Naive thymus-derived CD8-positive, alpha-beta T cell (primary cell): ENCODE measurements at regions of chr19 and their contacts with region 1.

Region 1: GRCh38 chr19:1896508-1896907 is 8.7 kb upstream of the ADAT3 start:
- DNase-seq: no peak
- ATAC-seq: no peak
- H3K4me3 Mint-ChIP-seq: peak overlapping the region; percentile 61 to 93 (median 90)
- H3K27ac Mint-ChIP-seq: peak overlapping the region in 9 of 10 donors; percentile 53 to 98 (median 96)
- H3K4me1 Mint-ChIP-seq: peaks cover 8 to 53% (median 35%) of the 10 kb centered on the region in 4 donors
- H3K27me3 Mint-ChIP-seq: no peaks in the 10 kb centered on the region

Region 2: GRCh38 chr19:1833540-1833939 is 63.0 kb before region 1 on chr19:
- POLR2A ChIA-PET with region 1: no interaction called
- DNase-seq: no peak
- ATAC-seq: no peak
- H3K4me3 Mint-ChIP-seq: no peak overlapping the region
- H3K27ac Mint-ChIP-seq: peak overlapping the region in 1 of 10 donors; percentile 43
- H3K4me1 Mint-ChIP-seq: peaks cover 10 to 43% (median 13%) of the 10 kb centered on the region in 4 donors
- H3K27me3 Mint-ChIP-seq: no peaks in the 10 kb centered on the region

Region 3: DNA sequence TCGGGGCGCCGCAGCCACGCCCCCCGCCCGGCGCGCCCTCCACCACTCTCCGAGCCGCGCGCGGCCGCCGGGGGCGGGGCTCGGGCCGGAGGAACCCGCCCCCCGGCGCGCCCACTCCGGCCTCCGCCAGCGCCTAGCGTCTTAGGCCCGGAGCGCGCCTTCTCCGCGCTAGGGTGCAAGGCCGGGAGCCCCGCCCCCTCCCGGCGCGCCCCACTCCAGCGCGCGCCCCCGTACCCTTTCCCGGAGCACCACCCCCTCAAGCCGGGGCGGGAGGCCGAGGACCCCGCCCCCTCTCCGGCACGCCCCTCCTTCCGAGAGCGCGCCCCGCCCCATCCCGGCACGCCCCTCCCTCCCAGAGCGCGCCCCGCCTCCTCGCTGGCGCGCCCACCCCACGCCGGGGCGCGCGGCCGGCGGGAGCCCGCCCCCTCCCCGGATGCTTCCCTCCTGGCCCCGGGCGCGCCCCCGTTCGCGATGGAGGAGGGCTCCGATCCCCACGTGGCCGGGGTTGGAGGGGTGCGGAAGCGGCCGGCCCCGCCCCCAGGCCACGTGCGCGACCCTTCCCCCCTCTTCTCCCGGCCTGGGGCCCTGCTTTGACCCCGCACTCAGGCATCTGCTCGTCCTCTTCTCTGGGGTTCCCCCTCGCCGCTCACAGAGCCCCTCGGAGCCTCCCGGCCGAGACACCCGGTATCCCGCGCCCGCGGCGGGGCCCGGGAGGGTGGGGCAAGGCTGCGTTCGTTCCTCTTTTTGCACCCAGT is 32.6 kb before region 1 on chr19:
- POLR2A ChIA-PET with region 1: interaction called, 16 read pairs
- DNase-seq: peak; percentile 88 to 98 (median 94)
- ATAC-seq: peak; percentile 59 to 71
- H3K4me3 Mint-ChIP-seq: peak overlapping the region; percentile 75 to 88 (median 78)
- H3K27ac Mint-ChIP-seq: peak overlapping the region; percentile 16 to 92 (median 85)
- H3K4me1 Mint-ChIP-seq: peaks cover 20 to 45% (median 44%) of the 10 kb centered on the region in 4 donors
- H3K27me3 Mint-ChIP-seq: no peaks in the 10 kb centered on the region

Region 4: DNA sequence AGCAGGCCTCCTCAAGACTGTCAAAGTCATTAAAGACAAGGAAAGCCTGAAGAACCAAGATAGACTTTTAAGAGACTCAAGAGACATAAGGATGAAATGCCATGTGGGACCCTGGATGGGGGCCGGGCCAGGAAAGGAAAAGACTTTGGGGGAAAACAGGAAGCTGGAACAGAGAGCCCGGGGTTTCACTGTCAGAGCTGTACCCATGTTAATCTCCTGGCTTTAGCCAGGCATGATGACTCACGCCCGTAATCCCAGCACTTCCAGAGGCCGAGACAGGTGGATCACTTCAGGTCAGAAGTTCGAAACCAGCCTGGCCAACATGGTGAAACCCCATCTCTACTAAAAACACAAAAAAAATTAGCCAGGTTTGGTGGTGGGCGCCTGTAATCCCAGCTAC is 27.5 kb before region 1 on chr19:
- POLR2A ChIA-PET with region 1: interaction called, 16 read pairs
- DNase-seq: no peak
- ATAC-seq: no peak
- H3K4me3 Mint-ChIP-seq: no peak overlapping the region
- H3K27ac Mint-ChIP-seq: peak overlapping the region in 5 of 10 donors; percentile 11 to 69 (median 15)
- H3K4me1 Mint-ChIP-seq: peaks cover 7 to 50% (median 36%) of the 10 kb centered on the region in 4 donors
- H3K27me3 Mint-ChIP-seq: no peaks in the 10 kb centered on the region

Region 5: DNA sequence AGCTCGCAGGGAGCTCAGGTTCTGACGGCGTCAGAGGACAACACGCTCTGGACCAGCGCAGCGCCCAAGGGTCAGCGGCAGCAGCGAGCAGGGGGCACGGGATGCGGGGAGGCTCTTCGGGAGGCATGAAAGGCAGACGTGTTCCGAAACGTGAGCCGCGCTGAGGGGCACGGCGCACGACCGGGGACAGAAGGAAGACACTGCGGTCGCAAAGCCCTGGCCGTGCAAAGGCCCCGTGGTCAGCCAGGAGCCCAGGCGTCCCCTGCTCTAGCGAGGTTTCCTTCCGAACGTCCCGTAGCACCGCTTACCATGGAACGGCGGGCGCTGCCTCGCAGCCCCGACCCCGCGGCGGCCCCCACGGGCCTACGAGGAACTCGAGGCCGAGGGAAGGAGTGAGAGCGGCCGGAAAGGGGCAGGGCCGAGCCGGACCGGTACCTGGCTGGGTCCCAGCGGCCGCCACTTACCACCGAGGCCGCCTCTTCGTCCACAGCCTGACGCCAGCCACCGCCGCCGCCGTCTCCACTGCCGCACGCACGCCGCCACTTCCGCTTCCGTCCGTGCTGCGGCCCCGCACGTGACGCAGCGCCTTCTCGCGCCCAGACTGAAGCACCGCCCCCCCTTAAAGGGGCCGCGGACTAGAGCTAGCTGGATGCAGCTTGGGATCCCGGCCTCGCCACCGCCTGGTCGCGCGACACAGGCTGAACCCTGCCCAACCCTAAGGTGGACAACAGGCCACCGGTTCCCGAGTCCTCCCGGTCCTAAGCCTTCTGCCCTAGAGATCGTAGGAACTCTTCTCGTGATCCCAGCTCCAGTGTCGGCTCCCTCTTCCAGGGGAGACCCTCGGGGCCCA is 20.6 kb before region 1 on chr19:
- POLR2A ChIA-PET with region 1: interaction called, 113 read pairs
- DNase-seq: peak; percentile 74 to 89 (median 84)
- ATAC-seq: peak; percentile 85 to 89
- H3K4me3 Mint-ChIP-seq: peak overlapping the region; percentile 92 to 99 (median 98)
- H3K27ac Mint-ChIP-seq: peak overlapping the region; percentile 88 to 99 (median 97)
- H3K4me1 Mint-ChIP-seq: peaks cover 13 to 39% (median 34%) of the 10 kb centered on the region in 4 donors
- H3K27me3 Mint-ChIP-seq: no peaks in the 10 kb centered on the region

Region 6: GRCh38 chr19:1884719-1885334 is 11.7 kb before region 1 on chr19:
- POLR2A ChIA-PET with region 1: interaction called, 113 read pairs
- DNase-seq: peak in 1 of 10 donors; percentile 37
- ATAC-seq: peak in 1 of 2 donors; percentile 3
- H3K4me3 Mint-ChIP-seq: peak overlapping the region; percentile 93 to 100 (median 99)
- H3K27ac Mint-ChIP-seq: peak overlapping the region; percentile 96 to 100 (median 100)
- H3K4me1 Mint-ChIP-seq: peaks cover 22 to 41% (median 35%) of the 10 kb centered on the region in 4 donors
- H3K27me3 Mint-ChIP-seq: no peaks in the 10 kb centered on the region

Region 7: DNA sequence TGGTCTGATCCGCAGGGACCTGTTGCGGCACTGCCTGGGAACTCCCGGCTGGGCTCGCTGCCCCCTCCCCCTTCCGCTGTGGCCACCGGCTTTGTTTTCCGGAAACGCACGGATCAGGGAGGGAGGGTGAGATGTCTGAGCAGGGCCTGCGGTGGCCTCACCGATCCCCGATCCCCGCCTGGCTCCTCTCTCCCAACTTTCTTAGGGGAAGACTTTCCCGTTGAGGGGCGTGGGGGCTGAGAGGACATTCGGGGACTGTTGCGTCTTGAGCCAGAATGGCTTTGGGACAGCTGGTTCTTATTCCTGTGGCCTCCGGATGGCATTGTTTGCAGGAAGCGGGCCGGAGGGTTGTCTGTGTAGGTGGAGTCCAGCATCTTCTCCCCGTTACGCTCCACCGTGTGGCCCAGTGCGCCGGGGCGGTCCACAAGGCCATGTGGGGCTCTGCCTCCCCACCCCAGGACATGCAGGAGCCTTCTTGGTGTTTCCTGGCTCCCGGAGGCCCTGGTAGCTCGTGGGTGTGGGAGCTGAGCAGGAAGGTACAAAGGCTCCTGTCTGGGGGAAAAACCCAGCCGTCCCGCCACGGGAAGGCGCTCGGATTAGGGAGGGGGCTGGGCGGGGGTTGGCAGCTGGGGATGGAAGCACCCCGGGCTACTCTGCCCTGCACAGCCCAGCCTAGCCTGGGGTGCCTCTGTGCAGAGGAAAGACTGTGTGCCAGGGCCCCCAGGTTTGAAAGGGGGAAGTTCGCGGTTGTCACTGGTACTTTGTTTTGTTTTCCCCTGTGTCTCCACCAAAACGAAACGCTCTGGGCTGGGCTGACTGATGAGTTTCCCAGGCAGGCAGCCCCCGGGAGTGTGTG is 45.8 kb after region 1 on chr19:
- POLR2A ChIA-PET with region 1: interaction called, 10 read pairs
- DNase-seq: peak; percentile 65 to 89 (median 84)
- ATAC-seq: peak; percentile 64 to 70
- H3K4me3 Mint-ChIP-seq: peak overlapping the region; percentile 93 to 98 (median 97)
- H3K27ac Mint-ChIP-seq: peak overlapping the region; percentile 94 to 100 (median 98)
- H3K4me1 Mint-ChIP-seq: peaks cover 16 to 52% (median 34%) of the 10 kb centered on the region in 4 donors
- H3K27me3 Mint-ChIP-seq: no peaks in the 10 kb centered on the region

Region 8: DNA sequence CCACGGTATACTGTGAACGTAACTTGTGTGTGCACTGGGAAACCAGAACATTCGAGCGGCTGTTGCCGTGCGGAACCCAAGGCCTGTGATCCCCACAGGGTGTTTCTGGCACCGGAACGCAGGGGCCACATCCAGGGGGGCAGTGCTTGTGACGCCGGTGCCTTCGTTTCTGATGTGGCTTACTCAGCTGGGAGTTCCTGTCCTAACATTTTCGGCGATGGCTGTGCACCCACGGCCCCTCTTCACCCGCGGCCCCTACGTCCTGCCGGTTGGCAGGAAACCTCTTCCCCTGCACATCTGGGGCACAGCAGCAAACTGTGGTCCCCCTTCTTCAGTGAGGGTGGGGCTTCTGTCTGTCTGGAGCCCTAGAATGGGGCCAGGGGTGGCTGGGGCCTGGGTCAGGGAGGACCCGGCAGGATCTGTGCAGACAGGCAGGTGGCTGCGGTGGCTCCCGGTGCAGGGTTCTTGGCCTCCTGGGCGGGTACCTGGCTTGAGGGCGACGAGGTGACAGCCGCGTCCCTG is 70.6 kb after region 1 on chr19:
- POLR2A ChIA-PET with region 1: no interaction called
- DNase-seq: peak in 8 of 10 donors; percentile 21 to 75 (median 60)
- ATAC-seq: peak; percentile 60 to 85
- H3K4me3 Mint-ChIP-seq: peak overlapping the region; percentile 61 to 83 (median 76)
- H3K27ac Mint-ChIP-seq: peak overlapping the region; percentile 60 to 94 (median 88)
- H3K4me1 Mint-ChIP-seq: peaks cover 12 to 35% (median 18%) of the 10 kb centered on the region in 4 donors
- H3K27me3 Mint-ChIP-seq: no peaks in the 10 kb centered on the region

Region 9: DNA sequence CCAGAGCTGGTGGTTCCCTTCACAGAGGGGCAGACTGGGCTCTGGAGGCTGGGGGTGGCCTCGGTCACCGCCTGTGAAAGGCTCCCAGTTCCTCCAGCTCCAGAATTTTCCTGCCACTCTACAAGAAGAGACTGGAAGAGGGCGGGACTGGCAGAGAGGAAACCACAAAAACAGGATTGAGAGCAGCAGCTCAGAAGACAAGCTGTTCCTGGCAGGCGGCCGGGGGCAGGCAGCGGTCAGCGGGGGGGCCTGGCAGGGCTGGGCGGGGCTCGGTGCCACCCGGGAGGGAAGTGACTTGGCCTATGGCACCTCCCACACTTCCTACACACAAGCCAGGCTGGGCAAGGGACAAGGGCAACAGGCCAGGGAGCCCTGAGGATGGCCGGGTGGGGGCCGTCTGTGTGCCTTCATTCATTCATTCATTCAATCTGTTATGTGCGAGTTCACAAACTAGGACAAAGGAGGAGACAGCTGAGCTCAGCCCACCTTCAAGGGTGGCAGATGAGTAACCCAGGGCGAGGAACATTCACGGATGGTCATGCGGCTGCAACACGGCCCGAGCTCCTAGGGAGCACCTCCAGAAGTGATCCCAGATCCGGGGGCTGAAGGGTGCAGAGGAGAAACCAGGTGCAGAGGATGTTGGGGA is 135.9 kb after region 1 on chr19:
- POLR2A ChIA-PET with region 1: no interaction called
- DNase-seq: peak in 1 of 10 donors; percentile 50
- ATAC-seq: peak; percentile 39 to 46
- H3K4me3 Mint-ChIP-seq: peak overlapping the region; percentile 55 to 90 (median 76)
- H3K27ac Mint-ChIP-seq: peak overlapping the region; percentile 80 to 95 (median 86)
- H3K4me1 Mint-ChIP-seq: peaks cover 16 to 33% (median 28%) of the 10 kb centered on the region in 4 donors
- H3K27me3 Mint-ChIP-seq: no peaks in the 10 kb centered on the region